ENCODE measurements at regions of chr10 and their contacts with region 1.

Region 1: DNA sequence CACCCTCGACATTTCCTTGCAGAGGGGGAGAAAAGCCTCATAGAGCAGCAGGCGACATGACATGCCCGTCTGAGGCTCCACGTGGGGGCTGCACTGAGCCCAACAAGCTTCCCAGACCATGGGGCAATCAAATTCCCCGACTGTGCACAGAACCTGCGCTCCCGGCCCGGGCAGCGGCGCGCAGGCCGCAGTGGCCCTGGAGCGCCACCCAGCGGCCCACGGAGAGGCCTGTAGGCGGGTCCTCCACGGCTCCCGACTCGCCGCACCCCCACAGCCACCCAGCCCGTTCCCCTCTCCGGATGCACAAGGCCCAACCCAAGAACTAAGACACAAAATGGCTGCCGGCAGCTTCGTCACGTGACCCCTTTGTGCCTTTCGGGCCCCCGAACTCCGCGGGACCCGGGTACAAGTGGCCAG is 816 bp downstream of the EPC1 start:
- DNase-seq: peak; percentile 94
- H3K4me3 Mint-ChIP-seq: peak overlapping the region; percentile 86
- H3K27ac Mint-ChIP-seq: peak overlapping the region; percentile 100
- H3K4me1 Mint-ChIP-seq: peaks cover 12% of the 10 kb centered on the region
- H3K27me3 Mint-ChIP-seq: no peaks in the 10 kb centered on the region
- CTCF ChIP-seq: peak; percentile 96

Region 2: DNA sequence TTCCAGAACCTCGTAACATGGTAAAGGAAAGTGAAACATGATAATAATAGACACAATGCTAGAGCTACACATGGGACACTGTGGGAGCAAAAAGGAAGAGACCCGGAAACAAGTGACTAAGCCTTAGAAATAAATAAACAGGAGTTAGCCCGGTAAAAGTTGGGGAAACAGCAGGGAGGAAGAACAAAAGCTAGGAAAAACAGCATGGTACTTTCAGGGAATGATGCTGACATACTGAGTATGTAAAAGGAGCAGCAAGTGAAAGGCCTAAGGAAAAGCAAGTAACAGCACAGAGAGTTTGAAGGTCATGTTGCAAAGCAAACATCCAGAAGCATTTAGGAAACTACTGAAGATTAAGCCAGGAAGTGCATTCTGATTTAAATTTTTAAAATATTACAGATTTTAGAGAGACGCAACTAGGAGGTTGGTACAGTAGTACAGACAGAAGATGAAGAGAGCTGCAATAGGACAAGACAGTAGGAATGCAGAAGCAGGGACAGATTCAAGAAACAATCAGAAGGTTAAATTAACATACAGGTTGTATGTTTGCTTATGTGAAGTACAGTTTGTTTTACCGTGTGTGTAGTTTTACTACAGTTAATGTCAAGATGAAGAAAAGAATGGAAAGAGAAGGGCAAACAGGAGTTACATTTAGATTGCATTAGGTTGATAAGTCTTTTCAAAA is 481.2 kb before region 1 on chr10:
- CTCF ChIA-PET with region 1: no interaction called
- POLR2A ChIA-PET with region 1: no interaction called
- intact Hi-C with region 1: loop called (anchors 10 kb)
- DNase-seq: peak; percentile 42
- H3K4me3 Mint-ChIP-seq: peak overlapping the region; percentile 40
- H3K27ac Mint-ChIP-seq: peak overlapping the region; percentile 77
- H3K4me1 Mint-ChIP-seq: peaks cover 38% of the 10 kb centered on the region
- H3K27me3 Mint-ChIP-seq: no peaks in the 10 kb centered on the region
- CTCF ChIP-seq: no peak

Region 3: DNA sequence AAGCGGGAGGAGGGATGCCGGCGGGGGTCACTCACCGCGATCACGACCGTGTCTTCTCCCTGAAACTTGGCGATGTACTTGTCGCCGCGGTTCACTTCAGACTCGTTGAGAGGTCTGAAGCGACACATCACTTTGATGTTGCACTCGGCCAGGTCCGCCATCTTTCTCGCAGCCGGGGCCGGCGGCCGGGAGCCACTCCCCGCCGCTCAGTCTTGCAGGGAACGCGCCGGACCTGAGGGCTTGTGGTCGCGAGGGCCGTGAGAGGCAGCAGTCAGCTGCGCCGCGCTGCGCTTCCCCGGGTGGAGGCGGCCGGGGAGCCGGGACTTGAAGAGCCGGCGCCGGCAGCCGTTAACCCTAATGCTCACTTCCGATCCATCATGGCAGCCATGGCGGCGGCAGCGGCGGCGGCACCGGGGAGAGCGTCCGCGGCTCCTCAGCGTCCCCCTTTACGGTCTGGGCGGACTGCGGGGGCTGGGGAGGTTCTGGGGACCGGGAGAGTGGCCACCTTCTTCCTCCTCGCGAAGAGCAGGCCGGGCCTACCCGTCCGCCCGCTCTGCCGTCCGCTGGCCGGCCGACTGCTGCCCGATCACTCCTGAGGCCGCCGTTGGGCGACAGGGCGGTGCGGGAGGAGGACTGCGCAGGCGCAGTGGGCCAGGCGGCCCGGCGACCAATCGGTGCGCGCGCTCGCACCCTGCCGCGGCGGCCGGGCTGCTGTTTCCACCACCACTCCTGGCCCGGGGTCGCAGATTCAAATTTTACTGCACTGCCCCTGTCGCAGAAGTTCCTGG is 290.1 kb before region 1 on chr10 and contains the start of gene KIF5B:
- CTCF ChIA-PET with region 1: no interaction called
- POLR2A ChIA-PET with region 1: no interaction called
- intact Hi-C with region 1: loop called (anchors 10 kb)
- DNase-seq: peak; percentile 83
- H3K4me3 Mint-ChIP-seq: peak within 1 kb of the TSS; percentile 98
- H3K27ac Mint-ChIP-seq: peak within 1 kb of the TSS; percentile 90
- H3K4me1 Mint-ChIP-seq: no peaks in the 10 kb centered on the region
- H3K27me3 Mint-ChIP-seq: no peaks in the 10 kb centered on the region
- CTCF ChIP-seq: no peak
- total RNA-seq, gene KIF5B: 150 and 187 TPM in 2 replicates

Region 4: DNA sequence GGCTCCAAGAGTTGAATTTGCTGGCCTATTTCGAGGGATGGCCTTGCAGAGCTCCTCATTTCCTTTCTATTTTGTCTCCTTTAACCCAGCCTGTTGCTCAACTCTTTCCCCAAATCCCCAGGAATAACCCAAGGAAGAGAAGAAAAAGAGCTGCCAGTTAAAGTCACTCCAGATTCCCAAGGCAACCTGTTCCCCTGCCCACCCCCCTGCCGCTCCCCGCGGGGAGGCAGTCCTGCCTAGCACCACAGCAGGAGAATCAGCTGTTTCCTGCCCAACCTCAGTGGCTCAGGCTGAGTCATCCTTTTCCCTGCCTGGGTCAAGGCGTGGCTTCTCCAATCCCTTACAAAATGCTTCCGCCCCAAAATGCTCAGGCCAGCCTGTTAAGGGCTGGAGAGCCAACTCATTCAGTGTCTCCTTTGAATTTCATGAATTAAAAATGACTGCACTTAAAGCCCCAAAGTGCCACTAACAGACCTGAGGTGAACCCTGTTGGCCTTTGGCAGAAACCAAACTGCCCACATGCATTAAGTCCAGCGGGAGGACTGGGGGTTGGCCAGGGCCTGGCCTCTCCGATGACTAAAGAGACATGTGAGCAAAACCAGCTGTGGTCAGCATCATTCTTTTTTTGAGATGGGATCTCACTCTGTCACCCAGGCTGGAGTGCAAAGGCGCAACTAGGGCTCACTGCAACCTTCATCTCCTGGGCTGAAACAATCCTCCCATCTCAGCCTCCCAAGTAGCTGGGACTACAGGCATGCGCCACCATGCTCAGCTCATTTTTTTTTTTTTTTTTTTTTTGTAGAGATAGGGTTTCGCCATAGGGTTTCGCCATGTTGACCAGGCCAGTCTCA is 206.7 kb before region 1 on chr10:
- CTCF ChIA-PET with region 1: no interaction called
- POLR2A ChIA-PET with region 1: no interaction called
- intact Hi-C with region 1: loop called (anchors 5 kb)
- DNase-seq: peak; percentile 97
- H3K4me3 Mint-ChIP-seq: peak overlapping the region; percentile 15
- H3K27ac Mint-ChIP-seq: no peak overlapping the region
- H3K4me1 Mint-ChIP-seq: peaks cover 18% of the 10 kb centered on the region
- H3K27me3 Mint-ChIP-seq: no peaks in the 10 kb centered on the region
- CTCF ChIP-seq: peak; percentile 23

Region 5: DNA sequence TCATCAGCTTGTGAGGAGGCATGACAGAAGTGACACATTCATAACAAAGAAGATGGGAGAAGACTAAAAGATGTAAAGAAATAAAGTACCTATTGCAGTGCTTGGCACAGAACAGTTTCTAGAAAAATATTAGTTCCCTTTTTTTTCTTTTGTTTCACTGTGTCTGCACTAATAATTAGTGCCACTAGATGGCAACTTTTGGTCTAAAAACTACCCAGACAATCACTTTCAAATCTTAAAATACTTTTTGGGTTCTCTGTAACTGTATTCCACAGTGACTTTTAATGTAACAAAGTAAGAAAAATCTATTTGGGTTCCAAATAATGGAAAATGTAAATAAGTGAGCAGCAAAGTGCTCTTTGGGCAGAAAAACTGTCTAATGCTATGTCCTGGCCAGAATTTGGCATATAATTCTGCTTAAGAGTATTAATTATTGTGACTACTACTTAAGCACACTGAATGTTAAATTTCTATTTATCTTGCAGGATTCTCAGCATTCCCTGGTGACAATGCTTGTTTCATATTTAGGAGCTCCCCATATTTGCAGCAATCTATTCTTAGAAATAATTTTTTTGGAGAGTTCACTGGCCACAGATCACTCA is 155.2 kb before region 1 on chr10:
- CTCF ChIA-PET with region 1: interaction called, 3 read pairs
- POLR2A ChIA-PET with region 1: interaction called, 3 read pairs
- intact Hi-C with region 1: loop called (anchors 1 kb)
- DNase-seq: peak; percentile 56
- H3K4me3 Mint-ChIP-seq: no peak overlapping the region
- H3K27ac Mint-ChIP-seq: no peak overlapping the region
- H3K4me1 Mint-ChIP-seq: peaks cover 5% of the 10 kb centered on the region
- H3K27me3 Mint-ChIP-seq: no peaks in the 10 kb centered on the region
- CTCF ChIP-seq: peak; percentile 42

Region 6: GRCh38 chr10:32207544-32207943 is 138.6 kb before region 1 on chr10:
- CTCF ChIA-PET with region 1: no interaction called
- POLR2A ChIA-PET with region 1: interaction called, 3 read pairs
- intact Hi-C with region 1: loop called (anchors 5 kb)
- DNase-seq: peak; percentile 64
- H3K4me3 Mint-ChIP-seq: no peak overlapping the region
- H3K27ac Mint-ChIP-seq: no peak overlapping the region
- H3K4me1 Mint-ChIP-seq: peaks cover 6% of the 10 kb centered on the region
- H3K27me3 Mint-ChIP-seq: no peaks in the 10 kb centered on the region
- CTCF ChIP-seq: peak; percentile 56

Region 7: GRCh38 chr10:32256613-32257437 is 89.3 kb before region 1 on chr10:
- CTCF ChIA-PET with region 1: interaction called, 7 read pairs
- POLR2A ChIA-PET with region 1: no interaction called
- intact Hi-C with region 1: loop called (anchors 1 kb)
- DNase-seq: peak; percentile 77
- H3K4me3 Mint-ChIP-seq: no peak overlapping the region
- H3K27ac Mint-ChIP-seq: no peak overlapping the region
- H3K4me1 Mint-ChIP-seq: peaks cover 9% of the 10 kb centered on the region
- H3K27me3 Mint-ChIP-seq: no peaks in the 10 kb centered on the region
- CTCF ChIP-seq: peak; percentile 85

Region 8: DNA sequence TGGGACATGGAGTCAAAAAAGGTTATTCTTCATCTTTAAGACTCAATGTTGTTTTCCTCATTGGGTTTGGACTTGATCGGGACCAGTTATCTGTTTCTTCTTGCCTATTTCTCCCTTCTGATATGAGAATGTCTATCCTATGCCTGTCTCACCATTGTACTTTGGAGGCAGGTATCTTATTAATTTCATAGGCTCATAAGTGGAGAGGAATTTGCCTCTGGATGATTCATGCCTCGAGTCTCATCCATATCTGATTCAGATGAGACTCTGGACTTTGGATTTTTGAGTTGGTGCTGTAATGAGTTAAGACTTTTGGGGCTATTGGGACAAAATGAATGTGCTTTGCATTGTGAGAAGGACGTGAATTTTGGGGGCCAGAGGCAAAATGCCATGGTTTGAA is 63.6 kb after region 1 on chr10:
- CTCF ChIA-PET with region 1: no interaction called
- POLR2A ChIA-PET with region 1: no interaction called
- intact Hi-C with region 1: no loop called
- DNase-seq: no peak
- H3K4me3 Mint-ChIP-seq: no peak overlapping the region
- H3K27ac Mint-ChIP-seq: no peak overlapping the region
- H3K4me1 Mint-ChIP-seq: peaks cover 13% of the 10 kb centered on the region
- H3K27me3 Mint-ChIP-seq: no peaks in the 10 kb centered on the region
- CTCF ChIP-seq: no peak